Transverse colon (tissue), 4 donors: ENCODE measurements at regions of chr14 and their contacts with region 1.

Region 1: GRCh38 chr14:72646861-72647528 is 246.9 kb downstream of the DPF3 start:
- DNase-seq: no peak
- H3K4me3 ChIP-seq: no peak overlapping the region
- H3K27ac ChIP-seq: no peak overlapping the region
- H3K4me1 ChIP-seq: peaks cover 0 to 4% (median 0%) of the 10 kb centered on the region in 4 donors
- H3K27me3 ChIP-seq: no peaks in the 10 kb centered on the region
- CTCF ChIP-seq: no peak
- EP300 ChIP-seq: no peak
- POLR2A ChIP-seq: no peak

Region 2: DNA sequence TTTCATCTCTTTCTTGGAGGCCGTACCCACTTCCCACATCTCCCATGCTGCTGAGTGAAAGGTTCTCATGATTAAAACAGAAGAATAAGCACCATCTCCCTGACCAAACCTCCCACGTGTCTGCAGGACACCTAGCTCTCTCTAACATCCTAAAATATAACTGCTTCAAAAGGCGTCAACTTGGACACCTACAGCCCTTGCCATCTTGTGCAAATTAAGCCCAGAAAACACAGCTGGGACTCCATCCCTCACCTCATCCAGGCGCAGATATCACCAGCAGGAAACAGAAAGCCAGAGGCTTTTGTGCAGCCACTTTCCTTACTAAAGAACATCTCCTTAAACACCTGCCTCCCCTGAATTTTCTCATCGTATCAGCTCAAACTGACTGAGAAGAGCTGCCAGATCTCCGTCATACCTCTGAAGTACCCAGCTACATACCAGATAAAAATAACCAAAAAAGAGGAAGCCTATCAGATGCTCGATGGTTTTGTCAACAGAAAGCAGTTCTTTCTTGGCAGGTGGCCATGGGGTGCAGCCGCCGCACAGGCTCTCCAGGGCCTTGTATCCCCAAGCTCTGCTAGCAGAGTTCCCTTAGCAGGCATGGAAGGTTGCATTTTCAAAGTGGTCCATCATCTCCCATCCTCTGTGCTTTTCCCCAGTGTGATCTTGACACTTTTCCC is 1866.5 kb before region 1 on chr14:
- in situ Hi-C with region 1: no loop called
- intact Hi-C with region 1: no loop called
- DNase-seq: peak; percentile 27
- H3K4me3 ChIP-seq: no peak overlapping the region
- H3K27ac ChIP-seq: no peak overlapping the region
- H3K4me1 ChIP-seq: no peaks in the 10 kb centered on the region
- H3K27me3 ChIP-seq: no peaks in the 10 kb centered on the region
- CTCF ChIP-seq: no peak
- EP300 ChIP-seq: no peak
- POLR2A ChIP-seq: no peak

Region 3: DNA sequence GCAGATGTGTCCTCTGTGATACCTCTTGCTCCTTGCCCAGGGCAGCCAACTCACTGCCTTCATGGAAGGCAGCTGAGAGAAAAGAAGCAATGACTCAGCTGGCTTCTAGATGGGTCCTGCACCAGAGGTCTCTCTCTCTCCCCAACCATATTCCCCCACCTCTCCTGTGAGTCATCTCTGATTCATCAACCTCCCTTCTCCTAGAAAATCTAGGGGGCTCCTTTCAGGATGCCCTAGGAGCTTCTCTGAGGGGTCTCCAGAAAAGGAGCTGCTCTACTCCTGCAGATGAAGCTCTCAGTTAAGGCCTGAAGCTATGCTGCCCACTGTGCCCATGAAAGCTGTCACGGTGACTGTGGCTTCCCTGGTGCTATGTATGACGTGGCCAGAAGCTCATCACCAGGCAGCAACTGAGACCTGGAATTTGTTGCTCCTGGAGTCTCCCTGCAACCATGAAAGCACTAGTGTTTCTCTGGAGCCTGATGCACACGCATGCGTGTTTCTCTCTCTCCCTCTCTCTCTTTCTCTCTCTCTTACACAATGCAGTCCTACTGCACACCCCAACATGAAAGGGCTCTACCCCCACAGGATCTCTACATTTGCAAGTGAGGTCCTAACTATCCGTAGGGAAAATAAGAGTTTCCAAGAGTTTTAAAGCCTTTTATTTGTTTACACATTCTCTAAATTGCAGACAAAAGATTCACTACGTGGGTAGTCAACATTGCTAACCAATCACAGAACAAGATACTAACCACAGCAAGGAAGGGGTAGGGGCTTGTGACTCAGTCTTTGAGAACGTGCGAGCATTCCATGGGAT is 38.4 kb before region 1 on chr14:
- in situ Hi-C with region 1: no loop called
- intact Hi-C with region 1: loop called (anchors 2 kb)
- DNase-seq: no peak
- H3K4me3 ChIP-seq: no peak overlapping the region
- H3K27ac ChIP-seq: no peak overlapping the region
- H3K4me1 ChIP-seq: no peaks in the 10 kb centered on the region
- H3K27me3 ChIP-seq: no peaks in the 10 kb centered on the region
- CTCF ChIP-seq: no peak
- EP300 ChIP-seq: no peak
- POLR2A ChIP-seq: no peak